Posterior vena cava (tissue), 2 donors: ENCODE measurements at regions of chr15 and their contacts with region 1.

Region 1: DNA sequence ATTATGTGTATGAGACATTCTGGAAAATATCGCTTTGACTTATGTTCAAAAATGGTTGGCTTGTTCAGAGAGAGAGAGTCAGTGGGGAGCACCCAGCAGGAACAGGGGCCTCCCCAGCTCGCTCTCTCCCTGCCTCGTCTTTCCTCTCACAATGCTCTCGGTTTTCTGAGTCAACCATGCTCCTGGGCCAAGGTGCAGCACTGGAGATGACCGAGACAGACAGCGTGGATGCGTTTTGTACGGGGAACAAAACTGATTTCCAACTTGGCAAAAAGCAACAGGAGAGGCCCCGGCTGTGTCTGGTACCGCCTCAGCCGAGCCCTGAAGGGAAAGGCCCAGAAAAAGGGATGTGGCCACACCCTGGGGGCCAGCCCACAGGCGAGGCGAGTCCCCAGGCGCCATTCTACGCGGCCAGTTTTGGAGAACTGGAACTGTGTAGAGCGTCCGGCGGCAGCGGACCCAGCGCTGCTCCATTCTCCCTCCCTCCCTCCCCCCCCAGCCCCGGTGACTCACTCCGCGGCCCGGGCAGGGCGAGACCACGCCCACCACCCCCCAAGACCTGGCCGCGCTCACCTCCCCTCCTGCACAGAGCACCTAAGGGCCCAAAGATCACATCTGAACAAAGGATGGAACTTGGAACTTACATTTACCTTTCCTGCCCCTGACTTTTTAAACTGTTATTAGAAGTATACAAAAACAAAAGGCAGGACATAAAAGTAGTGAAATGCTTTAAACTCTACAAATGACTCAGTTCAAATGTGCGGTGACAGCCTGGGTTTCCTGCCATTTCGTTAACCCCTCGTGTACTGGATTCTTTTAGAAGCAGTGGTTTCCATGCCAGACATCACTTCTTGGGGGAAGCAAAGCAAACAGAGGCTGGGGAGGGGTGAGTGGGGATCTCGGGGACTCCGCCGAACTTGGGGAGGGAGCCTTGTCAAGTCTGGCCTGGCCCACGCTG is 12.7 kb downstream of the ATP10A start:
- DNase-seq: peak; percentile 97

Region 2: DNA sequence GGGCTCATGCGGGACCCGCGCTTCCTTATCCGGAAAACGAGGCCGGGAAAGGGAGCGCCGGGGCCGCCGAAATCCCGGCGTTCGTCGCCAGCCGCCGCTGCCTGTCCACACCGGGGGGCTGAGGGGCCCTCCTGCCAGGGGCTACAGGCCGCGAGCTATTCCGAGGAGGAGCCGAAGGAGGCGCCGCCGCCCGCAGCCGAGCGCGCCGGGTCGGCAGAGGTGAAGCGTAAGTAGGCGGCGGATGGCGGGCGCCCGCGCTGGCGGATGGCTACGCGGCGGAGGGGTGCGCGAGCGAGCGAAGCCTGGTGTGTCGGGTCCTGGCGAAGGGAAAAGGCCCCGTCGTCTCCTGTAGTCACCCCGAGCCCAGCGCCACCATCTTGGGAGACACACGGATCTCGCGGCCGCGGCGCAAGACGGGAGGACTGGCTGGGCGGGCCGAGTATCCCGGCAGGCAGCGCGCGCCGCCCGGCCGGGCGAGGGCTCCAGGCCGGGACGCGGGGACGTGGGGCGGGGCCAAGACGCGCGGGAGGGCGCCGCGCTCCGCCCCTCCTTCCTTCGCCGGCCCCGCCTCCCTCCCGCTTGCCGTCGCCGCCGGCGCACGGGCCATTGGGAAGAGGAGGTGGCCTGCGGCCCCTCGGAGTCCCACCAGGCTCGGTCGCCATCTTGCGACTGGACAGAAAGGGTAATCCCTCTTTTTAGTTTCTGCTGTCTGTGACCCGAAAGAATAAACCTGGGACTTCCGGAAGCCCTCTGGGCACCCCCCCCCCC is 411.6 kb before region 1 on chr15 and contains the start of gene UBE3A:
- intact Hi-C with region 1: loop called in 1 of 2 experiments (anchors 5 kb)
- DNase-seq: peak; percentile 97
- total RNA-seq, gene UBE3A: 87.5 to 103 TPM

Region 3: DNA sequence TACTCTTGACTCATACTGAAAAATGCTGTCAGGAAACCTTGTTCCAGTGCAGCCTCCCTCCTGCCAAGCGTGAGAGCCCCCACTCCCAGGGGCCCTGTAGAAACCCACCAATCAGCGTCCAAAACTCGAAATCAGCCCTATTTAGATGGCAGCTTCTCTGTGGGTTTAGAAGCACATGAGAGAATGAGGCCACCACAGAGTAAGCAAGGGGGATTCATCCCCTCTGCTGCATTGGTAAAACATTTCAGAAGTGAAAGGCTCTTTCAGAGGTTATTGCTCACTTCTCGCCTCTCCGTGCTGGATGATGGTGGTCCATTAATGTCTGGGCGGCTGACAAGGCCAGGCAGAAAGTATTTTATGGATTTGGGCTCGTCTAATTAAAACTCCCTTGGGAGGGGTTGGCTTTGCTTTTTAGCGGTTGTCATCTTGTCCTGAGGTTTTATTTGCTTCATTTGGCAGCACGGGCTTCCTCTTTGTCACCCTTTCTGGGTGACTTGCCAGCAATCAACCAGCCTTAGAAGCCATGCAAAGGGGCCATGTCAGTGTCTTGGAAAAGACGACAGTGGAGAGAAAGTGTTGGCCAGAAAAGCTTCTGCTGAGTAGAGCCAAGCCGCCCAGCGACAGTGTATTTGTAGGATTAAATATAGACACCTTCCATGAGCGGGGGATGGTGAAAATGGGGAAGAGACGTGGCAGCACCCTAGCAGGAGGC is 132.8 kb before region 1 on chr15:
- intact Hi-C with region 1: no loop called
- DNase-seq: peak; percentile 76

Region 4: DNA sequence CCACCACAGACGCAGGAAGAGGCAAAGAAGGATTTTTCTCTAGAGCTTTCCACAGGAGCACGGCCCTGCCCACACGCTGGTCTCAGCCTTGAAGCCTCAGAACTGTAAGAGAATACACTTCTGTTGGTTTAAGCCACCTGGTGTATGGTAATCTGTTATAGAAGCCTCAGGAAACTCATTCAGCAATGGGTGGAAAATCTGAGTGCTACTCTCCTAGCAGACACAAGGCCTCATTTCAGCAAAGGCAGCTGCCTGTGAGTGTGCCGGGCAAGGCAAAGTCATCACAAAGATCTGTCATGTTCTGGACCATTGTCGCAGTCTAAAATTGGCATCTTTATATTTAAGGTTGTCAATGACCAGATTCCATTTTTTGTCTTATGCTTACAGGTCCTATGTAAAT is 18.3 kb before region 1 on chr15:
- intact Hi-C with region 1: loop called in 1 of 2 experiments (anchors 2 kb)
- DNase-seq: no peak

Region 5: DNA sequence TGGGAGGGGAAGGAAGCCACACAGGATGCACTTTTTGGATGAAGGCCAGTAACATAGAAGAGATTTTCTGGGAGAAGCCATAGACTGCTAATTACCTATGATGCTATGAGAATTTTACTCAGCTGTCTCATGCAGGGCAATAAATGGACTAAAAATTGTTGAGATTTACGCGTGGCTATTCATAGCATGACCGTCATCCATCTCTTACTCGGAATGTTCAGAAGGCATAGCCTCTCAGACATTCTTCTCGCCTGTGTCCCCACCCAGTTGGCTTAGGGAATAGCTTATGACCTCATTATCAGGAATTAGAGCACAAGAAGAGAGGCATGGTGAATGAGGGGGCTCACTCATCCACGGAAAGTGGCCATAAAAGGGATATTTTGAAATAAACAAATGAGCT is 120.6 kb after region 1 on chr15:
- intact Hi-C with region 1: no loop called
- DNase-seq: no peak

Region 6: GRCh38 chr15:26132811-26133210 is 282.4 kb after region 1 on chr15:
- intact Hi-C with region 1: no loop called
- DNase-seq: no peak